Naive thymus-derived CD4-positive, alpha-beta T cell (primary cell): ENCODE measurements at regions of chr17 and their contacts with region 1.

Region 1: DNA sequence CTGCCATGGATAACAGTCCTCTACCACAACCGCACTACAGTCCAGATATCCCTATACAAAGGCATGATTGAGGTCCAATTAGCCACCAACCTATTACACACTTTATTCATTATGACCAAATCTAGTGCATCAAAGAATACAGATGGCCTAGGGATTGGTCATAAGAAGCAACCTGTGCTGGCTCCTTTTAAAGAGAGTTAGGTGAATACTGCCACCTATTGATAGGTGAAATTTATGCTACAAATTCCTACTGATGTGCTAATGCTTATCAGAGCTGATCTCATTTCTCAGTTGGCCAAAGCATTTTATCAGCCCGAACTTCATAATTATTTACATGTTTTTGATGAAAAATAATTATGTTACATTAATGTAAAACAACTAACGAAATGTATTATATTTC is 166.2 kb downstream of the ANKFN1 start:
- DNase-seq: peak in 4 of 9 donors; percentile 7 to 26 (median 11)
- ATAC-seq: peak; percentile 40
- H3K4me3 ChIP-seq: no peak overlapping the region
- H3K4me3 Mint-ChIP-seq: no peak overlapping the region
- H3K27ac ChIP-seq: no peak overlapping the region
- H3K27ac Mint-ChIP-seq: no peak overlapping the region
- H3K4me1 ChIP-seq: no peaks in the 10 kb centered on the region
- H3K4me1 Mint-ChIP-seq: peaks cover 0 to 2% (median 0%) of the 10 kb centered on the region in 7 donors
- H3K27me3 ChIP-seq: no peaks in the 10 kb centered on the region
- H3K27me3 Mint-ChIP-seq: peaks cover 5 to 14% (median 9%) of the 10 kb centered on the region in 5 donors

Region 2: GRCh38 chr17:55735731-55736405 is 583.6 kb before region 1 on chr17:
- CTCF ChIA-PET with region 1: no interaction called
- POLR2A ChIA-PET with region 1: no interaction called
- intact Hi-C with region 1: loop called in 1 of 2 experiments (anchors 5 kb)
- DNase-seq: peak in 6 of 9 donors; percentile 7 to 38 (median 30)
- ATAC-seq: peak; percentile 61
- H3K4me3 ChIP-seq: no peak overlapping the region
- H3K4me3 Mint-ChIP-seq: no peak overlapping the region
- H3K27ac ChIP-seq: no peak overlapping the region
- H3K27ac Mint-ChIP-seq: no peak overlapping the region
- H3K4me1 ChIP-seq: no peaks in the 10 kb centered on the region
- H3K4me1 Mint-ChIP-seq: peaks cover 0 to 6% (median 0%) of the 10 kb centered on the region in 7 donors
- H3K27me3 ChIP-seq: no peaks in the 10 kb centered on the region
- H3K27me3 Mint-ChIP-seq: peaks cover 0 to 27% (median 10%) of the 10 kb centered on the region in 5 donors

Region 3: DNA sequence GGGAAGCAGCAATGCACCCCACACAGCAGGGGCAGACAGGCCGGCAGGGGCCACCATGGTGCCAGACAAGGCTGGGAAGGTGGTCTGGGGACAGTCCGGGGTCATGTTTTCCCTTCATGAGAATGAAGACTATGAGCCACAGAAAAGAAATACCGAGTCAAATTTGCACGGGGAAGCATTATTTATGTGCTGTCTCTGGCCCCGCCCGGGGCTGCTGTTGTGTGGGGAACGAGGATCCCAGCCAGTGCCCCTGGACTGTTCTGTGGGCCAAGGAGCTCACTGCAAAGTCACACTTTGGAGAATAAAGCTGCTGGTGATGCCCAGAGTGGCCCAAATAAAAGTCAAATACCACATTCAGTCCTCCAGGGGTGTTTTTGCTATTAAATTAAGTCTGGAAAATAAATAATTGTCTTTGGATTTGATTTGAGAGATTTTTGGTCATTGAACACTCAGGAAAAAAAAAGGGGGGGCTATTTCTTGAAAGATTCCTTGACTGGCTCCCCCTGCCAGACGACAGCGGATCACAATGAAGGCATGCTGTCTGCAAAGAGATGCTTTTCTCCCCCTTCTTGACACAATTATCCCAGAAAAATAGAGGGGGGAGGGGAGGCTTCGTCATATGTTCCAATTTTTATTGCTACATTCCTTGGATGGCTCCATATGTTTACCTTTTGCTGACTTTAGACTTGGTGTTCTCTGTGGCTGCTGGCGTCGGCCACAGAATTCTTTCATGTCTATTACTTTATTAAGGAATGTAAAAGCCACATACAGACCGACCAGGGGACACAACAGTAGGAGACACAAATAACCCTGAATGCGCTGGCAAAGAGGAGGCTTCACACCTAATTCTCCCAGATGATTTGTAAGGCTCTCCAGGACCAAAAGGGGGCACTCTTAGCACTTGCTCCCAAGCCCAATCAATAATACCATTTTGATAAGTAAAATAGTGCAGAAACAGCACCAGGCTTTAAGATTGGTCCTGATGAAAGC is 193.4 kb before region 1 on chr17:
- CTCF ChIA-PET with region 1: no interaction called
- POLR2A ChIA-PET with region 1: no interaction called
- intact Hi-C with region 1: loop called (anchors 2 to 5 kb)
- DNase-seq: peak in 3 of 9 donors; percentile 6 to 19 (median 7)
- ATAC-seq: no peak
- H3K4me3 ChIP-seq: no peak overlapping the region
- H3K4me3 Mint-ChIP-seq: no peak overlapping the region
- H3K27ac ChIP-seq: no peak overlapping the region
- H3K27ac Mint-ChIP-seq: no peak overlapping the region
- H3K4me1 ChIP-seq: no peaks in the 10 kb centered on the region
- H3K4me1 Mint-ChIP-seq: peaks cover 0 to 1% (median 0%) of the 10 kb centered on the region in 7 donors
- H3K27me3 ChIP-seq: no peaks in the 10 kb centered on the region
- H3K27me3 Mint-ChIP-seq: peaks cover 4 to 7% (median 6%) of the 10 kb centered on the region in 5 donors